ENCODE measurements at regions of chr19 and their contacts with region 1.

Region 1: DNA sequence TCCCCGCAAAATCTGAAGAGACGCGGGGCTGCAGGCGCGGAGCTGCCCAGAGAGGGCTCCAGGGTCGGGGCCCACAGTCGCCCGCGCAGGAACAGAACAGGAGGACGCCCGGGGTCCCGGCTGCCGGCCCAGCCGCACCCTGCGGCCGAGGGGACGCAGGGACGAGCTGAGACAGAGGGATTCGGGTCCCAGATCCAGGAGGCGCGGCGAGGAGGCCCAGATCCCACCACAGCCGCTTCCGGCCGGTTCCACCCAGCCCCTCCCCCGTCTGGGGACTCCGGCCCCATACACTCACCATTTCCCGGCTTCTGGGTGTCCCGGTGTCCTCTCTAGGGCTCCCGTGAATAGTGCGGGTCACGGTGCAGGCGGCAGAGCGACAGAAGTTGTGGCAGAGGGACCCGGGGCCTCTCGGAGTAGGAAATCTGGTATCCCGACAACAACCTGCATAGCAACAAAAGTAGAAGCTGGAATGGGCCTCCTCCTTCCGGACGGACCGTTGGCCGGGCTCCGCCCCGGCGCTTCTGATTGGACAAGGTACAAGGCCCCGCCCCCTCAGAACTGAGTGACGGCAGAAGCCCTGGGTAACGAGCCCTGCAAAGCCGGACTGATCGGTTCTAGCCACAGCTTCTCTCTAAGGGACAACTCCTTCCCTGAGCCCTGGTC is at the start of gene ZNF20:
- DNase-seq: no peak
- ATAC-seq: peak; percentile 98
- H3K4me3 ChIP-seq: peak within 1 kb of the TSS; percentile 75 to 79
- H3K27ac ChIP-seq: peak within 1 kb of the TSS; percentile 84
- H3K4me1 ChIP-seq: peaks cover 5% of the 10 kb centered on the region; the same call in 1 of the 2 replicates
- H3K27me3 ChIP-seq: no peaks in the 10 kb centered on the region
- CTCF ChIP-seq: no peak
- total RNA-seq, gene ZNF20: 4.9 TPM

Region 2: DNA sequence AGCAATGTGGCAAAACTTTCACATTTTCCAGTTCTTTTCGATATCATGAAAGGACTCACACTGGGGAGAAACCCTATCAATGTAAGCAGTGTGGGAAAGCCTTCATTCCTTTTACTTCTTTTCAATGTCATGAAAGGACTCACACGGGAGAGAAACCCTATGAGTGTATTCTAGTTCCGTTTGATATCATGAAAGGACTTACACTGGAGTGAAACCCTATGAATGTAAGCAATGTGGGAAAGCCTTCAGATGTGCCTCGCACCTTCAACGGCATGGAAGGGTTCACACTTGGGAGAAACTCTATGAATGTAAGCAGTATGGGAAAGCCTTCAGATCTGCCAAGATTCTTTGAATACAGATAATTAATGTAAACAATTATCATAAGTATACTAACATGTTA is 189.7 kb before region 1 on chr19:
- CTCF ChIA-PET with region 1: no interaction called
- POLR2A ChIA-PET with region 1: interaction called, 14 read pairs
- in situ Hi-C with region 1: no loop called
- intact Hi-C with region 1: no loop called
- DNase-seq: no peak
- ATAC-seq: no peak
- H3K4me3 ChIP-seq: no peak overlapping the region
- H3K27ac ChIP-seq: no peak overlapping the region
- H3K4me1 ChIP-seq: no peaks in the 10 kb centered on the region
- H3K27me3 ChIP-seq: no peaks in the 10 kb centered on the region
- CTCF ChIP-seq: no peak

Region 3: GRCh38 chr19:12064590-12065538 is 75.2 kb before region 1 on chr19 and contains the start of gene ZNF844:
- CTCF ChIA-PET with region 1: interaction called, 7 read pairs
- POLR2A ChIA-PET with region 1: interaction called, 12 read pairs
- in situ Hi-C with region 1: no loop called
- intact Hi-C with region 1: loop called (anchors 2 kb)
- DNase-seq: peak; percentile 27
- ATAC-seq: peak; percentile 97
- H3K4me3 ChIP-seq: peak within 1 kb of the TSS; percentile 68 to 82
- H3K27ac ChIP-seq: peak within 1 kb of the TSS; percentile 77
- H3K4me1 ChIP-seq: no peaks in the 10 kb centered on the region
- H3K27me3 ChIP-seq: no peaks in the 10 kb centered on the region
- CTCF ChIP-seq: no peak
- total RNA-seq, gene ZNF844: 8.6 TPM

Region 4: DNA sequence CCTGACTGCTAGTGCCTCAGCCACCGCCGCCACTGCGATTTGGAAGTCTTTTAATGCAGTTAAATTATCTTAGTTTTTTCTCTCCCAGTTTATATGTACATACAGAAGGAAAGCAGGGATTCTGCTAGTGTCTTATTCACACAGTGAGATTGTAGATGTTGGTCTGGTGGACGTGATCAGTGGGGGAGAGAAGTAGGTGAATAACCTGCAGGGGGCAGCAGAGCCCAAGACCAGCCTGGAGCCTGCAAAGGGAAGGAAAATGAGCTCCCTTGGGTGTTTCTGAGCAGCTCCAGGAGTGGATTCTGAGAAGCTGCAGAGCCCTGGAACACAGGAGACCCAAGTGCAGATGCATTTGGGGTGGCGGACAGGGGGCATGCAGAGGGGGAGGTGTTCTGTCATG is 49.2 kb before region 1 on chr19:
- CTCF ChIA-PET with region 1: interaction called, 20 read pairs
- POLR2A ChIA-PET with region 1: no interaction called
- in situ Hi-C with region 1: no loop called
- intact Hi-C with region 1: loop called (anchors 2 kb)
- DNase-seq: peak; percentile 10
- ATAC-seq: peak; percentile 46; the same call in 1 of the 2 replicates
- H3K4me3 ChIP-seq: no peak overlapping the region
- H3K27ac ChIP-seq: no peak overlapping the region
- H3K4me1 ChIP-seq: no peaks in the 10 kb centered on the region
- H3K27me3 ChIP-seq: no peaks in the 10 kb centered on the region
- CTCF ChIP-seq: peak; percentile 78

Region 5: GRCh38 chr19:12156223-12157058 is 16.4 kb after region 1 on chr19 and contains the start of gene ZNF625:
- CTCF ChIA-PET with region 1: no interaction called
- POLR2A ChIA-PET with region 1: interaction called, 10 read pairs
- in situ Hi-C with region 1: no loop called
- intact Hi-C with region 1: no loop called
- DNase-seq: no peak
- ATAC-seq: peak; percentile 100
- H3K4me3 ChIP-seq: peak within 1 kb of the TSS; percentile 65 to 83
- H3K27ac ChIP-seq: peak within 1 kb of the TSS; percentile 84
- H3K4me1 ChIP-seq: no peaks in the 10 kb centered on the region
- H3K27me3 ChIP-seq: no peaks in the 10 kb centered on the region
- CTCF ChIP-seq: no peak
- total RNA-seq, gene ZNF625: 7.9 TPM

Measured in Panc1 (cell line).